Head of caudate nucleus (tissue), 42 donors: ENCODE measurements at regions of chr9 and their contacts with region 1.

Region 1: DNA sequence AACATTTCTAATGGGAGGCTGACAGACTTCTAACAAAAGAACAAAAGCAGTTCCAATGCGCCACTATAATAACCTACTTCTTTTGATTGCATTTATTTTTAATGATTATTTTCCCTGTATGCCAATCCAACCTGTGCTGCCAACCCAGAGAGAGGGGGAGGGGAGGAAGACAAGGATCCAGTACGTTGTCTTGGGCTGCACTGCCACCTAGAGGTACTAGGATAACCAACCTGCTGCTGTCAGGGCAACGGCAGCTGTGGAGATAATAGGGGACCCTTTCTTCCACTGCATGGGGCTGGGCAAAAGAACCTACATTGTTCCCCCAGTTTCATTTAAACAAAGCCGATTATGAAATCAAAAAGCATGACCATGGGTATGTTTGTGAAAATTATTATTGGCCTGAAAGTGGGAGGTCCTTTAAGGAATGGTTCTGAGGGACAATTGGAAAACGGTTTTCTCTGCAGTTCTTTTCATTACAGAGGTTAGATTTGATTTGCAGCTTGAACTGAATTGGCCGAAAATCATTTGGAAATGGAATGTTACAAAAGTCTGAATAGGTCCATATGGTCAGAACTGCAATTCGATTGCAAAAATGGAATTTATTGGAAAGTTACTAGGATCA is 101.3 kb downstream of the RASEF start:
- DNase-seq: peak; percentile 69 to 95 (median 88)

Region 2: DNA sequence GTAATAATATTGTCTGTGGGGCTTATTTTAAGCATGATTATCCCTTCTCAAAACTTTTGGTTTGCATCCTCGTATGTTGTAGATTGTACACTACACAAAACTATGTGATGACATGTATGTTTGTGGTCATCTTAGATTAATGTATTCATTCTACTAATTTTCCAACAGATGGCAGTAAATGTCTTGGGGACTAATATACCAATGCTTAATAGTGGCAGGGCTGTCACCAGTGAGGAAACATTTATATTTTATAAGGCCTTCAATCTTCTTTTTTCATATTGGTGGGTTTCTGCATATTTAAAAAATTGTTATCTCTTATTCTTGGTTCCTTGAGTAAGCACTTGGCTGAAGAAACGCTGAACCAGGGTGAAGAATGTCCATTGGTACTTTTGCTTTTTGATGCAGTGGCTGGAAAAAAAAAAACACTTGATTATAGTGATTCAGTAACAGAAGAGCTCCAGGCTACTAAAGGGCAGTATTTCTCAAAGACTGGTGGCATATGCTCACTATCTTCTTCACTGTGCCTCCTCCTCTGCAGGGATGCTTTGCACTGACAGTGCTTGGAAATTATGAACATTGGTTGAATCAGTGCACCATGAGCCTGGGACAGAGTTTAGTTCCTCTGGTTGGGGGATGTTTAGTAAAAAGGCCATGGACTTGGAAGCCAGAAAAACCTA is 429.0 kb before region 1 on chr9:
- intact Hi-C with region 1: loop called (anchors 5 kb)
- DNase-seq: no peak